ENCODE measurements at regions of chr11 and their contacts with region 1.

Region 1: GRCh38 chr11:75280227-75280701 is 39.7 kb downstream of the TPBGL start:
- DNase-seq: peak; percentile 53 to 78
- H3K4me3 ChIP-seq: no peak overlapping the region
- H3K27ac ChIP-seq: peak overlapping the region in 1 of 2 donors; percentile 59
- H3K4me1 ChIP-seq: no peaks in the 10 kb centered on the region
- H3K27me3 ChIP-seq: no peaks in the 10 kb centered on the region
- CTCF ChIP-seq: peak; percentile 96 to 98 (median 98)
- POLR2A ChIP-seq: no peak

Region 2: DNA sequence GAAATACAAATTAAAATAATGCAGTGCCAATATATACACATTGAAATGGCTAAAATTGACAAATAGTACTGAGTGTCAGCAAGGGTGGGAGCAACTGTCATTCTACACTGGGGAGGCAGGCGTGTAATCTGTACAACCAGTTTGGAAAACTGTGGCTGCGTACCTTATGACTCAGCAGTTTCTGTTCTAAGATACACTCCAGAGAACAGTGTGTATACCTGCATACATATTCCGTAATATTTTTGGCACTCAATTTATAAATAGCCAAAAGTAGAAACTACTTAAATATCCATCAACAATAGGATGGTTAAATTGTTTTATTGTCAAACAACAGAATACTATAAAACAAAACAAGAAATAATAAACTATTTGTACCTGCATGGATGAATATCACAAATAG is 474.0 kb before region 1 on chr11:
- intact Hi-C with region 1: loop called (anchors 5 kb)
- DNase-seq: no peak
- H3K4me3 ChIP-seq: no peak overlapping the region
- H3K27ac ChIP-seq: no peak overlapping the region
- H3K4me1 ChIP-seq: no peaks in the 10 kb centered on the region
- H3K27me3 ChIP-seq: no peaks in the 10 kb centered on the region
- CTCF ChIP-seq: no peak
- POLR2A ChIP-seq: no peak

Region 3: DNA sequence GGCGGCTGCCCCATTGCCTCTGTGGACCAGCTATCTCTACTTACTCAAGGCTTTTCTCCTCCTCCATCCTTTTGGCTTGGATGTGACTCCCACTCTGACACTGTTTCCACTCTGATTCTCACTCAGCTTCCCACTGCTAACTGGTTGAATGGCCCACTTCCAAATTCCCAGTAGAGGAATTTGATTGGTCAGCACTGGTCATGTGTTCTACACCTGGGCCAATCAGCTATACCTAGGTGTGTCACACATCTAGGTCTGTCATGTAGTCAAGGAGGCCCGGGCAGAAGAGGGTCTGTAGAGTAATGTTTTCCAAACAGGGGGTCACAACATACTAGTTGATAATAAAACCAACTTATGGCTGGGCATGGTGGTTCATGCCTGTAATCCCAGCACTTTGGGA is 13.6 kb after region 1 on chr11:
- intact Hi-C with region 1: loop called (anchors 1 kb)
- DNase-seq: no peak
- H3K4me3 ChIP-seq: no peak overlapping the region
- H3K27ac ChIP-seq: peak overlapping the region in 1 of 2 donors; percentile 9
- H3K4me1 ChIP-seq: peaks cover 0 to 3% of the 10 kb centered on the region in 2 donors
- H3K27me3 ChIP-seq: no peaks in the 10 kb centered on the region
- CTCF ChIP-seq: no peak
- POLR2A ChIP-seq: no peak

Region 4: GRCh38 chr11:75388386-75389275 is 108.4 kb after region 1 on chr11:
- intact Hi-C with region 1: loop called (anchors 2 kb)
- DNase-seq: peak in 1 of 2 donors; percentile 48
- H3K4me3 ChIP-seq: no peak overlapping the region
- H3K27ac ChIP-seq: peak overlapping the region in 1 of 2 donors; percentile 70
- H3K4me1 ChIP-seq: peaks cover 0 to 4% of the 10 kb centered on the region in 2 donors
- H3K27me3 ChIP-seq: no peaks in the 10 kb centered on the region
- CTCF ChIP-seq: peak; percentile 77 to 83 (median 82)
- POLR2A ChIP-seq: no peak

Region 5: DNA sequence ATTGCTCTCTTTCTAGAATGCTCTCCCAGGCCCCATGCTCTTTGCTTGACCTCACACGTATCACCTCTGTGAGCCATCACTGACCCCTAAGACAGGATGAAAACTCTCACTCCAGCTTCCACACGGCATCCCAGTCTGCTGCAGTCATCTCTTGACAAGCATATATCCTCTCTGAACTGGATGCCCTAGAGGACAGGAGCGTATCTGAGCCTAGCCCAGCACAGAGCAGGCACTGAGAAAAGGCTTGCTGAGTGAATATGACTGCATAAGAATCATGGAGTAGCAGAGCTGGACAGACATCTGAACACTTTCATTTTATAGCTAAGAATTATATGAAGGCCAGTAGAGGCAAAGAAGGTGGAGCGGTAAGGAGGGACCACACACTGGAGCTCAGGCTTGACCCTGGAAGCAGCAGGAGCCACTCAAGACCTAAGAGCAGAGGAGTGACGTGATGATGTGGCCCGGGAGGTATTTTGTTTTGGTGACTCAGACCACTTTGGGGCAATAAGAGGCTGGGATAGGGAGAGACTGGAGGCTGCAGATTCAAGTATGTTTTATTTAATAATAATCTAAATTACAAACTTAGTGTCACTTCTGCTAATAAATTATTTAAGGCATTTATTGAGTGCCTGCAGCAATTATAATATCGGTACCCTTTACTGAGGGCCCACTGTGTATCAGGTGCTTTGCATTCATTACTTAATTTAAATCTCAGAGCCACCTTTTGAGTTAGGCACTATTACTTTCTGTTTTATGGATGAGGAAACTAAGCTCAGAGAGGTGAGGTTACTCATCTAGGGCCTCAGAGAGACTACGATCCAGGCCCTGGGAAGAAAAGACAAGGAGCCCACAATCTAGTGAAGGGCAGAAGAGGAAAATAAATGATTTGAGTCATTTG is 346.0 kb after region 1 on chr11:
- intact Hi-C with region 1: no loop called
- DNase-seq: no peak
- H3K4me3 ChIP-seq: no peak overlapping the region
- H3K27ac ChIP-seq: no peak overlapping the region
- H3K4me1 ChIP-seq: no peaks in the 10 kb centered on the region
- H3K27me3 ChIP-seq: no peaks in the 10 kb centered on the region
- CTCF ChIP-seq: no peak
- POLR2A ChIP-seq: no peak

Measured in breast epithelium (tissue), 4 donors.